ENCODE measurements at regions of chr9 and their contacts with region 1.

Region 1: DNA sequence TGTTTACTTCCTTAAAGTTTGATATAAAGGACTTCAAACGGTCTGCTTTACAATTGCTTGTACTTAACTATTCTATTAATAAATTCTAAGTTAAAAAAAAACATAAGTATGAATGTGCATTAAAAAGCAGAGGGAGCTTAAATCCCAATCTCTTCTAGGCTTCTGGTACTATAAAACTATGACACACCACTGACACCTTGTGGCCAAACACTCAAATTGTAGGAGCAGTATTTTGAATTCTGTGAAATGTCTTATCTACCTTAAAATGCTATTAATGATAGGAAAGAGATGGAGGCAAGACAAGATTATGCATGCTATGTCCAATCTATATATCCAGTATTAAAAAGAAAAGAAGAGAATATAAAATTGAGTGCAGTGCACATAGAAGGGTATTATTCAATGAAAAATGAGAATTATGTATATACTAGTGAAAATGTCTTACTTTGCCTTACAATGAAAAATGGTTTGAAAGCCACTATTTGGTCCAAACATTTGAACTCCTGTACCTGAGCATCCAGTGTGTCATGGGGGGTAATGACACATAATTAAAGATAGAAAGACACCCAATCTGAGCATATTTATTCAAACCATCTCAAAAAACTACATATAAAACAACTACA is 87.6 kb downstream of the ERP44 start:
- DNase-seq: peak; percentile 5 to 42
- H3K4me3 ChIP-seq: no peak overlapping the region
- H3K27ac ChIP-seq: no peak overlapping the region
- H3K4me1 ChIP-seq: no peaks in the 10 kb centered on the region
- H3K27me3 ChIP-seq: no peaks in the 10 kb centered on the region
- CTCF ChIP-seq: peak; percentile 79

Region 2: DNA sequence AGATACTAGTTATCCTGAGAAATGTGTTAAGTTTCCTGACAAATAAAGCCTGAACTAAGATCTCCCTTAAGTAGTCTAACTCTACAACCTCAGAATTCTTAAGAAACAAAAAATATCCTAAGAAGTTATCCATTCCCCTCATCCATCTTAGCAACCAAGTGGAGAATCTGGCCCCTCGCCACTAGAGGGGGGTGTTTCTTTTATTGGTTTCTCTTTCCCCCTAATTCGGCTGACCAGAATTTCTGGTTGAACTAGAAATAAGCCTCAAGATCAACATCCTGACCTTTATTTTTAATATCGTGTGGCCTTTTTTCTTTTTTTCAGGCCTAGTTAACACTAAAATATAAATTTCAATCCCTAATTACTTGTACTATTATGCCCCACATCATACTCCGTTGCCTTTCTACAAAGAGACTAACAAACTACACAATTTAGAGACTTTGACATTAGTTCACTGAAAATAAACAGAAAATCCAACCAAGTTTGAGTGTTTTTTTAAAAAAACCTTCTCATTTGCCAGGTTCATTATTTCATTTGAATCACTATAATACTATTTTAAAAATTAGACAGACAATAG is 203.8 kb before region 1 on chr9:
- CTCF ChIA-PET with region 1: no interaction called
- POLR2A ChIA-PET with region 1: no interaction called
- intact Hi-C with region 1: loop called (anchors 5 kb)
- DNase-seq: peak; percentile 65 to 73
- H3K4me3 ChIP-seq: no peak overlapping the region
- H3K27ac ChIP-seq: no peak overlapping the region
- H3K4me1 ChIP-seq: peaks cover 15% of the 10 kb centered on the region
- H3K27me3 ChIP-seq: no peaks in the 10 kb centered on the region
- CTCF ChIP-seq: peak; percentile 87